Heart left ventricle (tissue), 16 donors: ENCODE measurements at regions of chr13 and their contacts with region 1.

Region 1: DNA sequence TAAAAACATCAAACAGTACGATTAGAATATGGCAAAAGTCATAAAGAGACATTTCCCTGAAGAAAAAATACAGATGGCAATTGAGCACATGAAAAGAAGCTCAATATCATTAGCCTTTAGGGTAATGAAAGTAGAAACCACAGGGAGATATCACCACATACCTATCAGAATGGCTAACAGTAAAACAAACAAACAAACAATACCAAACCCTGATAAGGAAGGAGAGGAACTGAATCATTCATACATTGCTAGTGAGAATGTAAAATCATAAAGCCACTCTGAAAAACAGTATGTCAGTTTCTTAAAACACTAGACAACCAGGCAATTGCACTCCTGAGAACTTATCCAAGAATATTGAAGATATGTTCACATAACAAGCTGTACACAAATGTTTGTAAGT is 1342.5 kb upstream of the SLC10A2 start:
- DNase-seq: no peak
- ATAC-seq: no peak
- H3K4me3 ChIP-seq: no peak overlapping the region
- H3K27ac ChIP-seq: no peak overlapping the region
- H3K4me1 ChIP-seq: peaks cover 0 to 2% (median 0%) of the 10 kb centered on the region in 12 donors
- H3K27me3 ChIP-seq: no peaks in the 10 kb centered on the region
- CTCF ChIP-seq: no peak
- POLR2A ChIP-seq: no peak

Region 2: GRCh38 chr13:103656311-103656710 is 752.4 kb before region 1 on chr13:
- intact Hi-C with region 1: loop called in 1 of 10 experiments (anchors 5 kb)
- DNase-seq: no peak
- ATAC-seq: no peak
- H3K4me3 ChIP-seq: no peak overlapping the region
- H3K27ac ChIP-seq: no peak overlapping the region
- H3K4me1 ChIP-seq: no peaks in the 10 kb centered on the region
- H3K27me3 ChIP-seq: no peaks in the 10 kb centered on the region
- CTCF ChIP-seq: no peak
- POLR2A ChIP-seq: no peak

Region 3: GRCh38 chr13:104357174-104357573 is 51.6 kb before region 1 on chr13:
- intact Hi-C with region 1: loop called in 1 of 10 experiments (anchors 10 kb)
- DNase-seq: no peak
- ATAC-seq: no peak
- H3K4me3 ChIP-seq: no peak overlapping the region
- H3K27ac ChIP-seq: no peak overlapping the region
- H3K4me1 ChIP-seq: no peaks in the 10 kb centered on the region
- H3K27me3 ChIP-seq: no peaks in the 10 kb centered on the region
- CTCF ChIP-seq: no peak
- POLR2A ChIP-seq: no peak

Region 4: DNA sequence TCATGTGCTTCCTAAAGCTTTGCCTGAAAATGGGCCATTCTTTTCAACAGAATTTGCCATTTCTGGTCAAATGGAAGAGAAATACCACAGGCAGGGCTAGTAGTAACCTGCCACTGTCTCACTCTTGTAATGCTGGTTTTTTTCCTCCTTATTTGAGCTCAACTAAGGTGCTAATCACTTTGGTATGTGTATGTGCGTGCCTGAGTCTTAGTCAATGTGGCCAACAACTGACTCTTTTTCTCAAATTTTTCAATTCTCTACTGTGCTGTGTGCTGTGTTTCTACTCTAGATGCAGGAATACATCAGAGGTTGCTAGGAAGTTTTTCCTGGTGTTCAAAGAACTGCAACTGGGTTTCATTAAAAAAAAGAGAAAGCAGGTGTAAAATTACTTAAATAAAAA is 1256.6 kb after region 1 on chr13:
- intact Hi-C with region 1: no loop called
- DNase-seq: no peak
- ATAC-seq: no peak
- H3K4me3 ChIP-seq: no peak overlapping the region
- H3K27ac ChIP-seq: no peak overlapping the region
- H3K4me1 ChIP-seq: no peaks in the 10 kb centered on the region
- H3K27me3 ChIP-seq: no peaks in the 10 kb centered on the region
- CTCF ChIP-seq: no peak
- POLR2A ChIP-seq: no peak